A549 (cell line): ENCODE measurements at regions of chr15 and their contacts with region 1.

Region 1: DNA sequence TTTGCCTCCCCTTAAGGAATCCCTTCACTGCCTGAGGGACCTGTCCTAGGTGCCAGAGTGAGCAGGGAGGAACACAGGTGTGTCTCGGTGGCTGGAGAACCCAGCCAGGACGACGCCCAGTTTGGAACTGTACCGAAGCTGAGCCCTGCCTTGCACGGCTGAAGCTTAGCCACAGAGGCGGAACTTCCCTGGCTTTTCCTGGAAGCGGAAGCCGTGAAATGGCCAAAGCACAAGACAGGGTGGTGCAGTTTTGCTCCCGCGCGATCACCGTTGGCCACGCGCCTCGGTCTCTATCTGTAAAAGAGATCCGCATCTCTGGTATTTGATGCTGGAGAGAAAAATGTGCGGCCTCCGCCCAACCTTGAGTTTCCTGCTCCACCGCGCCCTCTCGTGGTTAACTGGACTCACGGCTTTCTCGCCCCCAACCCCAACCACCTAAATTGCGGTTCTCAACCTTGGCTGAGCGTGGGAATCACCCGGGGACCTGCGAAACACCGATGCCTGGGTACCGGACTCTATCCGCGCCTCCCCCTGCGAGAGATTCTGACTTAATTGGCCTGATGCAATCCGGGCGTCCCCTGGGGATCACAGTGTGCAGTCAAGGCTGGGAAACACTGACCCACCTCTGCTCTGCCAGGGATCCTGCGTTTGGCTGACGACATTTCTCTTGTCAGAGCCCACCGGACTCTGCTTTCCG is 70.7 kb upstream of the ABHD2 start:
- DNase-seq: peak; percentile 82 to 84
- ATAC-seq: peak; percentile 90 to 95
- H3K4me3 ChIP-seq: peak overlapping the region; percentile 37
- H3K27ac ChIP-seq: peak overlapping the region; percentile 68 to 79
- H3K4me1 ChIP-seq: peaks cover 17% of the 10 kb centered on the region
- CTCF ChIP-seq: peak; percentile 97
- EP300 ChIP-seq: no peak
- POLR2A ChIP-seq: no peak
- RAD21 ChIP-seq: peak; percentile 93 to 95

Region 2: GRCh38 chr15:88887068-88887580 is 130.4 kb before region 1 on chr15:
- CTCF ChIA-PET with region 1: interaction called, 851 read pairs
- POLR2A ChIA-PET with region 1: no interaction called
- DNase-seq: no peak
- ATAC-seq: no peak
- H3K4me3 ChIP-seq: no peak overlapping the region
- H3K27ac ChIP-seq: no peak overlapping the region
- H3K4me1 ChIP-seq: no peaks in the 10 kb centered on the region
- CTCF ChIP-seq: no peak
- EP300 ChIP-seq: no peak
- POLR2A ChIP-seq: no peak
- RAD21 ChIP-seq: no peak

Region 3: GRCh38 chr15:88982304-88982945 is 35.1 kb before region 1 on chr15:
- CTCF ChIA-PET with region 1: interaction called, 12 read pairs
- POLR2A ChIA-PET with region 1: interaction called, 4 read pairs
- DNase-seq: peak; percentile 72 to 86
- ATAC-seq: peak; percentile 78 to 89
- H3K4me3 ChIP-seq: no peak overlapping the region
- H3K27ac ChIP-seq: peak overlapping the region; percentile 87 to 89
- H3K4me1 ChIP-seq: peaks cover 57% of the 10 kb centered on the region
- CTCF ChIP-seq: no peak
- EP300 ChIP-seq: peak in 1 of 2 experiments; percentile 28; a peak in 2 of 5 replicates
- POLR2A ChIP-seq: no peak; the same call in none of the 2 replicates
- RAD21 ChIP-seq: no peak; a peak in 2 of 5 replicates

Region 4: DNA sequence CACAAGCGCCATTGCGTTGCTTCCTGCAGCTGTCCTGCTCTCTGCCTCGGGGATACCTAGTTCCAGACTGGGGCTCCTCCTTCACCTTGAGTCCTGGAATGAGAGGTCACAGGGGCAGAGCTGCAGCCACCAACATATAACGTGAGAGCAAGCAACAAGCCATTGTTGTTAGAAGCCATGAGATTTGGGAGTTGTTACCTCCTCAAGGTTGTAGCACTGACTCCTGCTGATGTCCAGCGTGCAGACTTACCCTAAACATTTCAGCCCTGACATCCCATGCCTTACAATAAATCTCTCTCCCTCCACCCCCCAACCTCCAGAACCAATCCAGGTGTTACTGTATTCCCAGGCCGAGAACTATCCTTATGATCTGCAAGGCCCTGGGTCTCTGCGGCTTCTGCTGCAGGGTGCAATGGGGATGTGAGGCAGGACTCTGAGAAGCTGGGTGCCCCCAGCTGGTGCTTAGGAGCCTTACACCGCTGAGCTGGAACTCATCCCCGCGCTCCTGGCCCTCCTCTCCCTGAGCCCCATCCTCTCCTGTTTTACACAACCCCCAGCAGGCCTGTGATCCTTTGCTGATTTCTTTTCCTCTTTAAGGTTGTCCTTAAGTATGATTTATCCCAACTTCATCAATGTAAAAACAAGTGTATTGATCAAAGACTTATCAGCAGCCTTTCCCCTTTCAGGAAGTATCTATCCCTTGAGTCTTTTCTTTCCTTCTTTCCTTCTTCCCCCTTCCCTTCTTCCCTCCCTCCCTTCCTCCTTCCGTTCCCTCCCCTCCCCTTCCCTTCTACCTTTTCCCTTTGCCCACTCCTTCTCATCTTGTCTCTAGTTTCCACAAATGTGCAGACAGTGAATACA is 13.4 kb before region 1 on chr15:
- CTCF ChIA-PET with region 1: interaction called, 13 read pairs
- POLR2A ChIA-PET with region 1: interaction called, 4 read pairs
- DNase-seq: peak; percentile 78 to 79
- ATAC-seq: peak; percentile 96
- H3K4me3 ChIP-seq: no peak overlapping the region
- H3K27ac ChIP-seq: peak overlapping the region; percentile 24 to 87; a peak in 5 of 6 replicates
- H3K4me1 ChIP-seq: peaks cover 27% of the 10 kb centered on the region
- CTCF ChIP-seq: peak; percentile 62
- EP300 ChIP-seq: no peak
- POLR2A ChIP-seq: no peak
- RAD21 ChIP-seq: peak; percentile 82 to 84

Region 5: DNA sequence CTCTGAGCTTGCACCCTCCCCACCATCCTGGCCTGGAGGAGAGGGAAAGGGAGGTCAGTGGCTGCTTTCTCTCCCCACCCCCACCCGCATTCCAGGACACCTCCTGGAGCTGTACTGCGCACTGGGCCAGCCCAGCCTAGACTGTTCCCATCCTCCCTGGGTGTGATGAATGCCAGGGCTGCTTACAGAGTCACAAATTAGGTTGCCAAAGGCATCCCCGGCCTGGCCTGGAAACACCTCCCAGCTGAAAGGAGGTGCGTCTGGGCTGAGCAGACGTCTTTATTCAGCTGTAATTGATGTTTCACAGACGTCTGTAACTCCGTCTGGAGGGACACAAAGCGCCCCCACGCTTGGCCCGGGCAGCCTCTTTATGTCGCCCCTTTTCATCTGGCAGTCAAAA is 431.3 kb after region 1 on chr15:
- CTCF ChIA-PET with region 1: no interaction called
- POLR2A ChIA-PET with region 1: no interaction called
- DNase-seq: no peak
- ATAC-seq: peak in 1 of 2 experiments; percentile 9; a peak in 1 of 6 replicates
- H3K4me3 ChIP-seq: no peak overlapping the region
- H3K27ac ChIP-seq: no peak overlapping the region
- H3K4me1 ChIP-seq: peaks cover 18% of the 10 kb centered on the region; the same call in 2 of the 3 replicates
- CTCF ChIP-seq: no peak
- EP300 ChIP-seq: no peak
- POLR2A ChIP-seq: no peak
- RAD21 ChIP-seq: no peak